ENCODE measurements at regions of chr20 and their contacts with region 1.

Region 1: GRCh38 chr20:59087829-59088433 is 45.3 kb upstream of the PRELID3B start:
- DNase-seq: peak; percentile 93
- H3K4me3 Mint-ChIP-seq: no peak overlapping the region
- H3K27ac Mint-ChIP-seq: no peak overlapping the region
- H3K4me1 Mint-ChIP-seq: no peaks in the 10 kb centered on the region
- H3K27me3 Mint-ChIP-seq: peaks cover 90% of the 10 kb centered on the region
- CTCF ChIP-seq: peak; percentile 86

Region 2: GRCh38 chr20:58870239-58871014 is 217.5 kb before region 1 on chr20:
- CTCF ChIA-PET with region 1: interaction called, 6 read pairs
- intact Hi-C with region 1: loop called (anchors 2 kb)
- DNase-seq: peak; percentile 91
- H3K4me3 Mint-ChIP-seq: no peak overlapping the region
- H3K27ac Mint-ChIP-seq: no peak overlapping the region
- H3K4me1 Mint-ChIP-seq: peaks cover 21% of the 10 kb centered on the region
- H3K27me3 Mint-ChIP-seq: no peaks in the 10 kb centered on the region
- CTCF ChIP-seq: peak; percentile 96

Region 3: GRCh38 chr20:59165891-59166709 is 78.2 kb after region 1 on chr20:
- CTCF ChIA-PET with region 1: no interaction called
- intact Hi-C with region 1: loop called (anchors 5 kb)
- DNase-seq: no peak
- H3K4me3 Mint-ChIP-seq: no peak overlapping the region
- H3K27ac Mint-ChIP-seq: no peak overlapping the region
- H3K4me1 Mint-ChIP-seq: no peaks in the 10 kb centered on the region
- H3K27me3 Mint-ChIP-seq: peaks cover 92% of the 10 kb centered on the region
- CTCF ChIP-seq: no peak

Region 4: GRCh38 chr20:59222253-59223181 is 134.6 kb after region 1 on chr20:
- CTCF ChIA-PET with region 1: interaction called, 19 read pairs
- intact Hi-C with region 1: loop called (anchors 1 kb)
- DNase-seq: peak; percentile 95
- H3K4me3 Mint-ChIP-seq: peak overlapping the region; percentile 60
- H3K27ac Mint-ChIP-seq: no peak overlapping the region
- H3K4me1 Mint-ChIP-seq: peaks cover 10% of the 10 kb centered on the region
- H3K27me3 Mint-ChIP-seq: peaks cover 100% of the 10 kb centered on the region
- CTCF ChIP-seq: peak; percentile 98

Region 5: DNA sequence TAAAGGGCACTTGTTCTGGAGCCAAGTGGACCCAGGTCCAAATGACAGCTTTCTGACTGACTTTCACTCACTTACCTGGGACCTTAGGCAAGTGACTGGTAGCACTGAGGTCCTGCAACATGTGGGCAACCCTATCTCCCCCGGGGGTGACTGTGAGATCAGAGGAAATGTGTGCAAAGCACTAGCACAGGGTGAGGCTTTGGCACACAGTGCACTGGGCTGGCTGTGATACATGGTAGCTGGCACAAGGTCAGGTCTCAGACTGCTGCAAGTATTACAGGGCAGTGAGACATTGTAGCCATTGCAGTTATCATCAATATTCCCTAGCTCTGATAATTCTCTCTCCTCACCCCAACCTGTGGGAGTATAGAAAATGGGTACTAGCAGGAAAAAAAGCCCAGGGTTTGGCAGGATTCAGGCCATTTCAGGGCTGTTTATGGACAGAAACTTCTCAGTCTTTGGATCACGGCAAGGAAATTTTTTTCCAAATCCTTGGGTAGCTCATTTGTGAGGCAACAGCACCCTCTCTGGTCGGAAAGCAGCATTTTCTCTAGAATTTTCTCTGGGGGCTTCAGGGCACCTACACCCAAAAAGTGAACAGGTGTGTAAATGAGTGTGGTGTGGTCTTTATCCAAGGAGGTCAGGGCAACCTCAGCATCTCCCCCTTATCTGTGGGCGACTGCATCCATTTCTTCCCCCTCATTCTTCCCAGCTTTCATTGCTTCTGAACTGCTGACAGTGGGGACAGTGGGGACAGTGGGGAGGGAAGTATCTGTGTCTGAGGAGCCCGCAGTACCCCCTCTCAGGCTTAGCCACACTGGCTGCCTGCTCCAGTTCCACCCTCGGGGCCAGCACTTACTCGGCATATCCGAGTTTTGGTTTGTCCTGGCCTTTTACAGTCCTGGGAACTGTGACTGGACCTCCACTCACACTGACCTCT is 367.7 kb after region 1 on chr20:
- CTCF ChIA-PET with region 1: interaction called, 30 read pairs
- intact Hi-C with region 1: loop called (anchors 1 kb)
- DNase-seq: peak; percentile 34
- H3K4me3 Mint-ChIP-seq: no peak overlapping the region
- H3K27ac Mint-ChIP-seq: no peak overlapping the region
- H3K4me1 Mint-ChIP-seq: no peaks in the 10 kb centered on the region
- H3K27me3 Mint-ChIP-seq: peaks cover 100% of the 10 kb centered on the region
- CTCF ChIP-seq: peak; percentile 82